PC-3 (cell line): ENCODE measurements at regions of chr14 and their contacts with region 1.

Region 1: GRCh38 chr14:102046343-102047278 is 40.2 kb downstream of the HSP90AA1 start:
- DNase-seq: peak; percentile 71
- ATAC-seq: peak; percentile 95
- H3K4me3 ChIP-seq: no peak overlapping the region
- H3K27ac ChIP-seq: no peak overlapping the region
- H3K4me1 ChIP-seq: no peaks in the 10 kb centered on the region
- H3K27me3 ChIP-seq: no peaks in the 10 kb centered on the region
- CTCF ChIP-seq: peak; percentile 63

Region 2: GRCh38 chr14:102020058-102020971 is 26.3 kb before region 1 on chr14:
- CTCF ChIA-PET with region 1: interaction called, 17 read pairs
- POLR2A ChIA-PET with region 1: no interaction called
- intact Hi-C with region 1: no loop called
- DNase-seq: peak; percentile 88
- ATAC-seq: peak; percentile 67
- H3K4me3 ChIP-seq: no peak overlapping the region
- H3K27ac ChIP-seq: peak overlapping the region; percentile 58
- H3K4me1 ChIP-seq: peaks cover 20% of the 10 kb centered on the region
- H3K27me3 ChIP-seq: no peaks in the 10 kb centered on the region
- CTCF ChIP-seq: no peak

Region 3: DNA sequence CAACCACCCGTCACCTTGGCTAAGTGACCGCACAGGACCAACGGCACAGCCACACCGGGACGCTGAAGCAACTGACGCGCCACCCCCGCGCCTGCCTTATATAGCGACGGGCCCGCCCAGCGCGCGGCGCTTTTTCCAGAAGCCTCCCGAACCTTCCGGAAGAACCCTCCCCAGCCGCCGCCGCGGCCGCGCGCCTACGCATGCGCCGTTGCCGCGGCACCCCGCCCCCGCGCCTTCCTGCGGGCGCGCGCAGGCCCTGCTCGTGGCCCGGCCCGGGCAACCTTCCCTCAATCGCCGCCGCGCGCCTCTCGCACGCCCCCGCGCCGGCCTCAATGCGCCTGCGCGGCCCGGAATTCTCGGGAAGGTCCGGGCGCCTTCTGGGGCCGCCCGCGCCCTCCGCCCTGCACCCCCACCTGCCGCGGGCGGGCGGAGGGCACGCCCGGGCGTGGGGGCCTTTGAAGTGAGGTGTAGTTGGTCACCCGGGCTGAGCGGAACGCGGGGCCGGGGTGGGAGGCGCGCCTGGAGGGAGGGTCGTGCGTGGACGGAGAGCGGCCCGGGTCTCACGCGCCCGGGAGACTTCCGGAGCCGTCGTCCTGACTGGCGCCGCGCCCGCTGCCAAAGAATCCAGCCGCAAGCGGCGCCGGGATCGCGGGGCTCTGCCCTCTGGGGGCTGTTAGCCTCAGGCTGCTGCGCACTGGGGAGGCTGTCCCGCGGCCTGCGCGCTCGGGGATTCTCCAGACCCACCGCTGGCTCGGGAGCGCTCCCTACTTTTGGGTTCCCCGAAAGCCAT is 40.6 kb after region 1 on chr14 and contains the start of gene HSP90AA1:
- CTCF ChIA-PET with region 1: no interaction called
- POLR2A ChIA-PET with region 1: no interaction called
- intact Hi-C with region 1: no loop called
- DNase-seq: peak; percentile 96
- ATAC-seq: peak; percentile 78
- H3K4me3 ChIP-seq: peak within 1 kb of the TSS; percentile 86
- H3K27ac ChIP-seq: peak within 1 kb of the TSS; percentile 79
- H3K4me1 ChIP-seq: peaks cover 28% of the 10 kb centered on the region
- H3K27me3 ChIP-seq: no peaks in the 10 kb centered on the region
- CTCF ChIP-seq: 0 out of 2 replicates have a peak, but pooled peaks have one; percentile 16
- total RNA-seq, gene HSP90AA1: 671 and 785 TPM in 2 replicates